Activated T-helper 2 cell treated with anti-CD3 and anti-CD28 coated beads, Interferon-gamma antibody, Interleukin-2, Interleukin-4, amounts not matched to agents 10 μg/mL and 5 μg/mL and 100 μg/mL, durations not matched to agents 14 hours and 24 hours and 36 hours (primary cell): ENCODE measurements at regions of chr7 and their contacts with region 1.

Region 1: DNA sequence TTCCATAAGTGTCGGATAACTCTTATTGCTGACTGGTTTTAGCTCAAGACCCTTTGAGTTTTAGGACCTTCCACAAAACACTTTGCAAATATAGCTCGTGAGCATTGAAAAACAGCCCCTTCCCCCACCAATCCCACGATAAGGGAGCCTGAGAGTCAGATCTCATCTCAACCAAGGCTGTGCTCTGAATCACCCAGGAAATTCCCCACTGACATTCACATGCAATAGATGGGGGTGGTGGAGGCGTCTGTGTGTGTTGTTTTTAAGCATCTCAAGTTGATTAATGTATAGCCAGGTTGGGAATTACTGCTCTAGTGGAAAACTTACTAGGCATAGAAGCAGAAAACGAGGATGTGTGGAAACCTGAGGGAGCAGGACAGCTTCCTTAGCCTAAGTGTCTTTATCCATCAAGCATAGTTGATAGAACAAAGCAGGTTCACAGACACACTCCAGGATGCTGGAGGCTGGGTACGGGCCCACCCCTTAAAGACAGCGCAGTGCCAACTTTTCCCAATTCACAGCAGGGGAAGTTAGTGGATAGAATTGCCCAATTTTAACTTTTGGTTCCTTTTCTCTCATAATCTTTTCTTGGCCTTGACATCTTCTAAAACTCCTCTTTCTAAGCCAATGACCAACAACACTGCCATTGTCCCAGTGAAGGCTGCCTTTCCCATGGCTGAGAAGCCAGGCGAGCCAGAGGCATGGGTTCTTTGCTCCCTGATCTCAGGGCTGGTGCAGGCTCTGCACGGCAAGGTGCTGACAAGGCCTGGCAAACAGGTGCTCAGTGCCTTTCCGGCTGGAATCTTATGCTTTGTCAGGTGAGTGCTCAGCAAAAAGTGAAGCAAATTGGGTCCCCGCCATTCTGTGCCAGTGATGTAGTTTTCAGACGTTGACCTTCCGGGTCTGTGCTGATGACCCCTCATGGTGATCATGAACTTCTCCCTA is 98.5 kb upstream of the INSIG1 start:
- DNase-seq: no peak
- H3K4me3 Mint-ChIP-seq: no peak overlapping the region
- H3K27ac Mint-ChIP-seq: peak overlapping the region; percentile 69
- H3K4me1 Mint-ChIP-seq: peaks cover 29% of the 10 kb centered on the region
- H3K27me3 Mint-ChIP-seq: no peaks in the 10 kb centered on the region

Region 2: GRCh38 chr7:155216293-155217272 is 17.4 kb after region 1 on chr7:
- intact Hi-C with region 1: loop called (anchors 2 kb)
- DNase-seq: no peak
- H3K4me3 Mint-ChIP-seq: no peak overlapping the region
- H3K27ac Mint-ChIP-seq: no peak overlapping the region
- H3K4me1 Mint-ChIP-seq: peaks cover 15% of the 10 kb centered on the region
- H3K27me3 Mint-ChIP-seq: no peaks in the 10 kb centered on the region